CD8-positive, alpha-beta T cell (primary cell): ENCODE measurements at regions of chr12 and their contacts with region 1.

Region 1: GRCh38 chr12:68565375-68565903 is 45.3 kb upstream of the RAP1B start:
- DNase-seq: peak in 2 of 9 experiments; percentile 20 to 35
- ATAC-seq: peak; percentile 40
- H3K4me3 ChIP-seq: no peak overlapping the region
- H3K4me3 Mint-ChIP-seq: no peak overlapping the region
- H3K27ac ChIP-seq: no peak overlapping the region
- H3K27ac Mint-ChIP-seq: no peak overlapping the region
- H3K4me1 ChIP-seq: peaks cover 17% of the 10 kb centered on the region
- H3K4me1 Mint-ChIP-seq: peaks cover 21% of the 10 kb centered on the region
- H3K27me3 ChIP-seq: no peaks in the 10 kb centered on the region
- H3K27me3 Mint-ChIP-seq: no peaks in the 10 kb centered on the region
- CTCF ChIP-seq: no peak

Region 2: DNA sequence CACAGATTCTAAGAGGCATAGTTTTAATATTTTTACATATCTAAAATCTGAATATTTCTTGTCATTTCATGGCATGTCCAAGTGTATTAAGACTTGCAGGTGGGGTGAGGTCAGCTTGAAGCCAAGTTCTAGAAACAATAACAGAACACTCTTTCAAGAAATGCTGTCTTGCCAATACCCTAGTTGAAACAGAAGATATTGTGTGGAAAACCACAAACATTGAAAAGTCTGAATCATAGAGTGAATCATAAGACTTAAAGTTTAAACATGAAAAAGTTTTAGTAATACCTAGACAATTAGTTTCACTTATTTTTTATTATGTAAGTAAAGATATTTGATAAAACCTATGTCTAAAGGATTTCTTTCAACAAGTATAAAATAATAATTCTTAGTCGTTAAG is 1487.8 kb before region 1 on chr12:
- CTCF ChIA-PET with region 1: no interaction called
- POLR2A ChIA-PET with region 1: no interaction called
- intact Hi-C with region 1: no loop called
- DNase-seq: no peak
- ATAC-seq: no peak
- H3K4me3 ChIP-seq: no peak overlapping the region
- H3K4me3 Mint-ChIP-seq: no peak overlapping the region
- H3K27ac ChIP-seq: no peak overlapping the region
- H3K27ac Mint-ChIP-seq: no peak overlapping the region
- H3K4me1 ChIP-seq: no peaks in the 10 kb centered on the region
- H3K4me1 Mint-ChIP-seq: no peaks in the 10 kb centered on the region
- H3K27me3 ChIP-seq: no peaks in the 10 kb centered on the region
- H3K27me3 Mint-ChIP-seq: peaks cover 9% of the 10 kb centered on the region
- CTCF ChIP-seq: no peak

Region 3: GRCh38 chr12:68580911-68581310 is 15.5 kb after region 1 on chr12:
- CTCF ChIA-PET with region 1: no interaction called
- POLR2A ChIA-PET with region 1: interaction called, 6 read pairs
- intact Hi-C with region 1: loop called in 1 of 2 experiments (anchors 2 kb)
- DNase-seq: no peak
- ATAC-seq: no peak
- H3K4me3 ChIP-seq: no peak overlapping the region
- H3K4me3 Mint-ChIP-seq: no peak overlapping the region
- H3K27ac ChIP-seq: no peak overlapping the region
- H3K27ac Mint-ChIP-seq: no peak overlapping the region
- H3K4me1 ChIP-seq: peaks cover 57% of the 10 kb centered on the region
- H3K4me1 Mint-ChIP-seq: peaks cover 55% of the 10 kb centered on the region
- H3K27me3 ChIP-seq: no peaks in the 10 kb centered on the region
- H3K27me3 Mint-ChIP-seq: no peaks in the 10 kb centered on the region
- CTCF ChIP-seq: no peak

Region 4: GRCh38 chr12:69015841-69016240 is 450.4 kb after region 1 on chr12:
- CTCF ChIA-PET with region 1: no interaction called
- POLR2A ChIA-PET with region 1: no interaction called
- intact Hi-C with region 1: no loop called
- DNase-seq: no peak
- ATAC-seq: no peak
- H3K4me3 ChIP-seq: no peak overlapping the region
- H3K4me3 Mint-ChIP-seq: no peak overlapping the region
- H3K27ac ChIP-seq: no peak overlapping the region
- H3K27ac Mint-ChIP-seq: no peak overlapping the region
- H3K4me1 ChIP-seq: no peaks in the 10 kb centered on the region
- H3K4me1 Mint-ChIP-seq: no peaks in the 10 kb centered on the region
- H3K27me3 ChIP-seq: no peaks in the 10 kb centered on the region
- H3K27me3 Mint-ChIP-seq: peaks cover 12% of the 10 kb centered on the region
- CTCF ChIP-seq: no peak